ENCODE measurements at regions of chr19 and their contacts with region 1.

Region 1: GRCh38 chr19:7098701-7099596 is 29.4 kb downstream of the ZNF557 start:
- DNase-seq: peak; percentile 80 to 94 (median 89)
- ATAC-seq: peak; percentile 93
- H3K4me3 ChIP-seq: peak overlapping the region; percentile 87
- H3K4me3 Mint-ChIP-seq: peak overlapping the region; percentile 94
- H3K27ac ChIP-seq: peak overlapping the region; percentile 79 to 90
- H3K27ac Mint-ChIP-seq: peak overlapping the region; percentile 89
- H3K4me1 ChIP-seq: peaks cover 20% of the 10 kb centered on the region
- H3K4me1 Mint-ChIP-seq: peaks cover 40% of the 10 kb centered on the region
- H3K27me3 ChIP-seq: no peaks in the 10 kb centered on the region
- H3K27me3 Mint-ChIP-seq: no peaks in the 10 kb centered on the region
- CTCF ChIP-seq: no peak

Region 2: DNA sequence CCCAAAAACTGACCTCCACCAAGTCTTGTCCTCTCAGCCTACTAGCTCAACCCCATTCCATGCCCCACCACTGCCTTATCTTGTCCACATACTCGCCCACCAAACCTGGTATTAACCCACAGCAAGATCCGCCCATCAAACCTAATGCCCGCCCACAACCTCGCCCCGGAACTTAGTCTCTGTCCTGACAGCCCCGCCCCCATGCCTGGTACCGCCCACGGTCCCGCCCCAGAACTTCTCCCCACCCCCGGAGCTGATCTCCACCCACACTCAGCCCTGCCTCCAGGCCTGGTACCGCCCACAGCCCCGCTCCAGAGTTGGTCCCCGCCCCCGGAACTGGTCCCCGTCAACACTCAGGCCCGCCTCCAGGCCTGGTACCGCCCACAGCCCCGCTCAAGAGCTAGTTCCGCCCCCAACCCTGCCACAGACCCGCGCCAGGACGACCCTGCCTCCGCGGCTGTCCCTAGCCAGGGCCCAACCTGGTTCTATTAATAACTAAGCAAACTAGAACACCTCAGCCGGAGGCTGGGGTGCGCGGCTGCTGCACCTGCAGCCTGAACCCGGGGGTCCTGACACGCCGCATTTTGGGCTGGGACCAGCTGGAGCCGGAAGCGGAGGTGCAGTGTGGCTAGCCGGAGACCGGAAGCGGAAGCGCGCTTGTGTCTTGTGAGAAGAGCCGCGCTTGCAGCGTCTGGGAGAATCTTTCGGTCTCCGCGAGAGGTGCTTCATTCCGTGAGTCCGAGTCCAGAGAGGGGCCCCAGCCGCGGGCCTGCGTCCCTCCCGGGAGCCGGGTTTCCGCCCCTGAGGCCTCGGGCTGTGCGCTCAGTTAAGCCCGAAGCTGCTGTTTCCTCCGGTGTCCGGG is 29.7 kb before region 1 on chr19 and contains the start of gene ZNF557:
- CTCF ChIA-PET with region 1: interaction called, 3 read pairs
- POLR2A ChIA-PET with region 1: interaction called, 55 read pairs
- intact Hi-C with region 1: no loop called
- DNase-seq: peak; percentile 98 to 100 (median 99)
- ATAC-seq: peak; percentile 95
- H3K4me3 ChIP-seq: peak within 1 kb of the TSS; percentile 88
- H3K4me3 Mint-ChIP-seq: peak within 1 kb of the TSS; percentile 96
- H3K27ac ChIP-seq: peak within 1 kb of the TSS; percentile 85 to 89
- H3K27ac Mint-ChIP-seq: peak within 1 kb of the TSS; percentile 91
- H3K4me1 ChIP-seq: peaks cover 21% of the 10 kb centered on the region
- H3K4me1 Mint-ChIP-seq: peaks cover 23% of the 10 kb centered on the region
- H3K27me3 ChIP-seq: no peaks in the 10 kb centered on the region
- H3K27me3 Mint-ChIP-seq: no peaks in the 10 kb centered on the region
- CTCF ChIP-seq: no peak
- total RNA-seq, gene ZNF557: 15.8 to 17.4 TPM

Region 3: GRCh38 chr19:7083076-7083956 is 15.6 kb before region 1 on chr19:
- CTCF ChIA-PET with region 1: interaction called, 3 read pairs
- POLR2A ChIA-PET with region 1: interaction called, 12 read pairs
- intact Hi-C with region 1: loop called in 1 of 2 experiments (anchors 1 kb)
- DNase-seq: no peak
- ATAC-seq: no peak
- H3K4me3 ChIP-seq: no peak overlapping the region
- H3K4me3 Mint-ChIP-seq: no peak overlapping the region
- H3K27ac ChIP-seq: no peak overlapping the region
- H3K27ac Mint-ChIP-seq: peak overlapping the region; percentile 6
- H3K4me1 ChIP-seq: no peaks in the 10 kb centered on the region
- H3K4me1 Mint-ChIP-seq: no peaks in the 10 kb centered on the region
- H3K27me3 ChIP-seq: no peaks in the 10 kb centered on the region
- H3K27me3 Mint-ChIP-seq: no peaks in the 10 kb centered on the region
- CTCF ChIP-seq: no peak

Region 4: GRCh38 chr19:7340959-7341837 is 242.2 kb after region 1 on chr19:
- CTCF ChIA-PET with region 1: interaction called, 7 read pairs
- POLR2A ChIA-PET with region 1: interaction called, 5 read pairs
- intact Hi-C with region 1: loop called (anchors 1 kb)
- DNase-seq: peak; percentile 68 to 94 (median 88)
- ATAC-seq: peak; percentile 19
- H3K4me3 ChIP-seq: no peak overlapping the region
- H3K4me3 Mint-ChIP-seq: peak overlapping the region; percentile 74
- H3K27ac ChIP-seq: no peak overlapping the region
- H3K27ac Mint-ChIP-seq: peak overlapping the region; percentile 92
- H3K4me1 ChIP-seq: peaks cover 67% of the 10 kb centered on the region
- H3K4me1 Mint-ChIP-seq: peaks cover 62% of the 10 kb centered on the region
- H3K27me3 ChIP-seq: no peaks in the 10 kb centered on the region
- H3K27me3 Mint-ChIP-seq: no peaks in the 10 kb centered on the region
- CTCF ChIP-seq: peak; percentile 84

Region 5: GRCh38 chr19:7348587-7349230 is 249.8 kb after region 1 on chr19 and contains the start of gene ARHGEF18:
- CTCF ChIA-PET with region 1: interaction called, 9 read pairs
- POLR2A ChIA-PET with region 1: interaction called, 26 read pairs
- intact Hi-C with region 1: no loop called
- DNase-seq: peak; percentile 34 to 94 (median 72)
- ATAC-seq: peak; percentile 73
- H3K4me3 ChIP-seq: peak within 1 kb of the TSS; percentile 84
- H3K4me3 Mint-ChIP-seq: peak within 1 kb of the TSS; percentile 99
- H3K27ac ChIP-seq: peak within 1 kb of the TSS; percentile 63 to 74
- H3K27ac Mint-ChIP-seq: peak within 1 kb of the TSS; percentile 92
- H3K4me1 ChIP-seq: peaks cover 78% of the 10 kb centered on the region
- H3K4me1 Mint-ChIP-seq: peaks cover 74% of the 10 kb centered on the region
- H3K27me3 ChIP-seq: no peaks in the 10 kb centered on the region
- H3K27me3 Mint-ChIP-seq: no peaks in the 10 kb centered on the region
- CTCF ChIP-seq: no peak
- total RNA-seq, gene ARHGEF18: 121 TPM

Region 6: DNA sequence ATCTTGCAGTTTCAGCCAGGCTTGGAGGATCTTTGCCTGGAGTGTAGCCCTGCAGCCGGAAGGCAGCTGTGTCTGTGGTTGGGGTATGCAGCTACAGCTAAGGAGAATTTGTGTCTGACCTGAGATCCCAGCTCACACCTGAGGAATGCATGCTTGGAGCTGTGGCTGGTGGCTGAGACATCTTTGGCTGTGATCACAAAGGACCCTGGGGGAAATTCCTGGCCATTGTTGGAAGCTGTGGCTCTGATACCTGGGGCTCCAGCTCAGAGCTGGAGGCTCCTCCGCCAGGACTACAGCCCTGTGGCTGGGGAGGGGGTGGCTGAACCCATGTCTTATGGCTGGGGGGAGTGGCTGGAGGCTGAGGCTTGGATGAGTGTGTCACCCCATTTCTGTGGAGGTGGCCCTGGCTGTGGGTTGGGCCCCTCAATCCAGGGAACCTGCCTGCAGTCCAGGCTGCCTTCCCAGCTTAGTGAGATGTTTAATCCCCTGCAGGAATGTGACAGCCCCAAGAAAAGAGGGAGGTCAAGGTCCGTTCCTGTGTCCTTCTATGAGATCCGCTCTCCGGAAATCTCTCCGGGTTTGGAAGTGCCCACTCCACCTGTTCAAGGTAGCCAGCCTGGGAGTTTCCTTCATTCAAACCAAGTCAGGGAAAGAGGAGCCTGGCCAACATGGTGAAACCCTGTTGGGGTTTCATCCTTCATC is 277.4 kb after region 1 on chr19:
- CTCF ChIA-PET with region 1: interaction called, 7 read pairs
- POLR2A ChIA-PET with region 1: no interaction called
- intact Hi-C with region 1: loop called (anchors 1 to 5 kb)
- DNase-seq: no peak
- ATAC-seq: no peak
- H3K4me3 ChIP-seq: no peak overlapping the region
- H3K4me3 Mint-ChIP-seq: no peak overlapping the region
- H3K27ac ChIP-seq: peak overlapping the region in 1 of 2 donors; percentile 35
- H3K27ac Mint-ChIP-seq: no peak overlapping the region
- H3K4me1 ChIP-seq: peaks cover 8% of the 10 kb centered on the region
- H3K4me1 Mint-ChIP-seq: peaks cover 8% of the 10 kb centered on the region
- H3K27me3 ChIP-seq: no peaks in the 10 kb centered on the region
- H3K27me3 Mint-ChIP-seq: no peaks in the 10 kb centered on the region
- CTCF ChIP-seq: no peak

Region 7: GRCh38 chr19:7799640-7800355 is 700.8 kb after region 1 on chr19:
- CTCF ChIA-PET with region 1: no interaction called
- POLR2A ChIA-PET with region 1: no interaction called
- intact Hi-C with region 1: loop called in 1 of 2 experiments (anchors 2 kb)
- DNase-seq: peak; percentile 17 to 81 (median 48)
- ATAC-seq: no peak
- H3K4me3 ChIP-seq: no peak overlapping the region
- H3K4me3 Mint-ChIP-seq: no peak overlapping the region
- H3K27ac ChIP-seq: no peak overlapping the region
- H3K27ac Mint-ChIP-seq: no peak overlapping the region
- H3K4me1 ChIP-seq: peaks cover 9% of the 10 kb centered on the region
- H3K4me1 Mint-ChIP-seq: peaks cover 6% of the 10 kb centered on the region
- H3K27me3 ChIP-seq: peaks cover 7 to 10% of the 10 kb centered on the region in 2 experiments
- H3K27me3 Mint-ChIP-seq: peaks cover 33% of the 10 kb centered on the region
- CTCF ChIP-seq: peak; percentile 76

Measured in CD4-positive, alpha-beta T cell (primary cell).